Thyroid gland (tissue), 4 donors: ENCODE measurements at regions of chr4 and their contacts with region 1.

Region 1: DNA sequence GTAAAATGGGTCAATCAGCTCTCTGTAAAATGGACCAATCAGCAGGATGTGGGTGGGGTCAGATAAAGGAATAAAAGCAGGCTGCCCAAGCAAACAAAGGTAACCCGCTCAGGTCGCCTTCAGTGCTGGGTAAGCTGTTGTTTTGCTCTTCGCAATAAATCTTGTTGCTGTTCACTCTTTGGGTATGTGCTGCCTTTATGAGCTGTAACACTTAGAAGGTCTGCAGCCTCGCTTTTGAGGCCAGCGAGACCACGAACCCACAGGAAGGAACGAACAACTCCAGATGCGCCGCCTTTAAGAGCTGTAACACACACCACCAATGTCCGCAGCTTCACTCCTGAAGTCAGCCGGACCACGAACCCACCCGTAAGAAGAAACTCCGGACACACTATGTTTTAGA is 11.5 kb upstream of the CAMK2D start:
- DNase-seq: no peak
- H3K4me3 ChIP-seq: no peak overlapping the region
- H3K27ac ChIP-seq: no peak overlapping the region
- H3K4me1 ChIP-seq: no peaks in the 10 kb centered on the region
- H3K27me3 ChIP-seq: no peaks in the 10 kb centered on the region
- CTCF ChIP-seq: no peak
- POLR2A ChIP-seq: no peak

Region 2: DNA sequence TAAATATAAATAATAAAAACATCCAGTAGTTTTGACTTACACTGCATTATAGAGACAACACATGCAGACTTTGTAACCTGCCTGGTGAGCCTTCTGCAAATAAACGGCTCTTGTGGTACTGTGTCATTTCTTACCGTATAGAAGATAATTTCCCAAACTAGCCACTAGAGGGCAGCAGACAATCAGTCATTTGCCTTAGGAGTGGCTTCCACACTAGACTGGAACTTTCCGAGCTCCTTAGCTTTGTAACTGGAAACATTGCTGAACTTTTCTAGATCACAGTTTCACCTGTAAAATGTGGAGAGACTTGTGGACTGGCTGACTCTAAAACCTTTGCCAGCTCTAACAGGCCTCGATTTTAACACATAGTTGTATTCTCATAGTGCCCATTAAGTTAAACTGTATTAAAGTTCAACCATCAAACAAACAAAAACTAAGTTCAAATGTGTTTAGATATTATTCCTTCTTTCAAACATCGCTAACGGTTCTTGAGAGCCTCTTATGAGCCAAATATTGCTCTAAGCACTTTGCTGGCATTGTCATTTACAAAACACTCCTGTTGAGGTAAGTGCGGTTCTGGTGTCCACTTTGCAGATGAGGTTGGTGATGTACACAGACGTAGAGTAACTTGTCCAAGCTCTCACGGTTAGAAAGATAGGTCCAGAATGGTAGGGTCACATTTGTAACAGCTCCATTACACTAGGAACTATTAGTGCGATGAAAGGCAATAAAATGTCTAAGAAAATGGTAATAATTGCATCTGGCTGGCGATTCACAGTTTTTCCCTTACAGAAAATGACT is 378.1 kb before region 1 on chr4:
- intact Hi-C with region 1: loop called (anchors 10 kb)
- DNase-seq: peak; percentile 25 to 47
- H3K4me3 ChIP-seq: no peak overlapping the region
- H3K27ac ChIP-seq: peak overlapping the region in 1 of 3 donors; percentile 74
- H3K4me1 ChIP-seq: no peaks in the 10 kb centered on the region
- H3K27me3 ChIP-seq: no peaks in the 10 kb centered on the region
- CTCF ChIP-seq: peak; percentile 75 to 97 (median 86)
- POLR2A ChIP-seq: no peak

Region 3: DNA sequence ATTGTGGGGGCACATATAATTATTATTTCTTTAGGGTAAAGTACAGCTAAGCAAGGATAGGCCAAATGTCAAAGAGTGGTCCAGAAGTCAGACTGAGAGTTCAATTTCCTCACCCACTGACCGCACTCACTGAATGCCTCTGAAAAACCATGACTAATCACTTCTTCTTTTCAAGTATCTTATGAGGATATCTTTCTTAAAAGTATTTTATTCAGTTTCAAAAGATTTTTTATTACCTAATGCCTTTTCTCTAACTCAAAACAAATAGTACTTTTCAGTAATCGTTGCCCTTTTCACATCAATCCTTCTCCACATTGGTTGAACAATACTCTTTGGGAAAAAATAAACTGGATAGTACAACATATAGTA is 50.3 kb after region 1 on chr4:
- intact Hi-C with region 1: no loop called
- DNase-seq: no peak
- H3K4me3 ChIP-seq: no peak overlapping the region
- H3K27ac ChIP-seq: no peak overlapping the region
- H3K4me1 ChIP-seq: no peaks in the 10 kb centered on the region
- H3K27me3 ChIP-seq: no peaks in the 10 kb centered on the region
- CTCF ChIP-seq: no peak
- POLR2A ChIP-seq: no peak